Posterior vena cava (tissue), 2 donors: ENCODE measurements at regions of chr12 and their contacts with region 1.

Region 1: DNA sequence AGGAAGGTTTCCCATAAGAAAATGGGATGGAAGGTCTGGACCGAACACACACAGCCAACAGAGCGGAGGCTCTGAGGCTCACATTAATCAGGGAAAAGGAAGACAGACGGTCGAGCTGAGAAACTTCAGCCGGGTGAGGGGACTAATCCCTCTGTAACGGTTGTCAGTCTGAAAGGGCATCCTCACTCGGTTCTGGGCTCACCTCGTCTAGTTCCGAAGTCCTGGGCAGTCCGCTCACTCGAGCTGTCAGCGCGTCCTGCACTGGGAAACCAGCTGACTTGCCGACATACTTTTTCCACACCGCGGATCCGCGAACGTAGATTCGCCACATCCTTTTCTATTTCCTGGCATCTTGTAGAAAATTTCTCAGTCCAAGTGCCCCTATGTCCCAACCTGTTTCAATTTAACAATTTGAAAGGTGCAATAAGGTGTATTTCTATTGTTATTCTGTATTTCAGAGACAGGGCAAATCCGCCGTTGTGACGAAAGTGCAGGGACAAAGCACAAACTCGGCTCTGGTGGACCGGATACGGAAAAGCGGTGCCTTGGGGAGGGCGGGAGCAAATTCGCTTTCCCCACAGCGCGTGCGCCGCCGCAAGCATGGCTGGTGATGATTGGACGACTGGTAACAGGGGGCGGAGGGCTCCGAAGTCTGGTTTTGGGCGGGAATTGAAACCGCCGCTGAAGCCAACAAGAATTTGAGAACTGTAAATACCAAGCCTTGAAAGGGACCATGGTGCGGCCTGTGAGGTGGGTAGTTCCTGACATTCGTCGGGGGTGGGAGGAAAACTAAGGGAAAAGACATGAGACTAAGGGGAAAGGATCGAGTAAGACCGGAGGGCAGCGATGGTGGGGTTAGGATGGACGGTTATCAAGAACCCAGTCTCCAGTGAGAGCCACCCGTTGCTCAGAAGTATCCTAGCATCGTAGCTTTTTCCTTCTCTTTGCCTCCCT is at the start of gene RAD51AP1:
- DNase-seq: peak; percentile 99
- total RNA-seq, gene RAD51AP1: 1.0 to 1.7 TPM

Region 2: DNA sequence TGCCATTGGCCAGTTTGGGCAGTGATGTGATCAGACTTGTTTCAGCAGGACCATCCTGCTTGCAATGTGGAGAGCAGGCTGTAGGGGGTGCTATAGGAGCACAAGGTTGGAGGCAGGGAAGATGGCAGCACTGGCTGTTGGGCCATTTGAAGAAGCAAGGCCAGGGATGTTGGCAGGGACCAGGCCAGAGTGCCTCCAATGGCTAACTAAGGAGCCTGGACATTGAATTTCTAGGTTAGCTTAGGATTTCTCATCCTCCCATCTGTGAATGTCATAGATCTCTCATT is 182.5 kb before region 1 on chr12:
- intact Hi-C with region 1: loop called in 1 of 2 experiments (anchors 10 kb)
- DNase-seq: no peak